ENCODE measurements at regions of chr17 and their contacts with region 1.

Region 1: GRCh38 chr17:4004517-4005295 is 40.5 kb upstream of the ATP2A3 start:
- DNase-seq: peak; percentile 77 to 83 (median 80)
- ATAC-seq: peak; percentile 87
- H3K4me3 ChIP-seq: no peak overlapping the region
- H3K4me1 ChIP-seq: peaks cover 8% of the 10 kb centered on the region
- CTCF ChIP-seq: peak; percentile 98

Region 2: DNA sequence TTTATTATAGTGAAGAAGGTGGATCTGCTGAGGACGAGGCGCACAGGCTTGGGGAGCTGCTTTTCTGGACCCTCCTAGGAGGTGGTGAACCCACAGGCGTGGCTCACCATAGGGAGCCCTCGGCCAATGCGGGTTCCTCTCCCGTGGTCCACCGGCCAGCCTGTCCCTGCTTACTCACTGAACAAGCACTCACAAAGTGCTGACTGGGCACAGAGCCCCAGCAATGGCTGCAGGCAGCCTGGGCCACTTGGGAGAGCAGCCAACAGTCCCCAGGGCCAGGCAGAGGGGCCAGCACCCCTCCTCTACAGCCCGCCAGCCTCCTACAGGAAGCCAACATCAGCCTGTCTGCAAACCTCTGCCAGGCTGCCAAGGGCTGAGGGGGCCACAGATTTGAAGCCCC is 139.5 kb before region 1 on chr17:
- intact Hi-C with region 1: loop called in 1 of 2 experiments (anchors 5 kb)
- DNase-seq: peak in 1 of 3 donors; percentile 55
- ATAC-seq: peak; percentile 17
- H3K4me3 ChIP-seq: no peak overlapping the region
- H3K4me1 ChIP-seq: no peaks in the 10 kb centered on the region
- CTCF ChIP-seq: no peak

Region 3: DNA sequence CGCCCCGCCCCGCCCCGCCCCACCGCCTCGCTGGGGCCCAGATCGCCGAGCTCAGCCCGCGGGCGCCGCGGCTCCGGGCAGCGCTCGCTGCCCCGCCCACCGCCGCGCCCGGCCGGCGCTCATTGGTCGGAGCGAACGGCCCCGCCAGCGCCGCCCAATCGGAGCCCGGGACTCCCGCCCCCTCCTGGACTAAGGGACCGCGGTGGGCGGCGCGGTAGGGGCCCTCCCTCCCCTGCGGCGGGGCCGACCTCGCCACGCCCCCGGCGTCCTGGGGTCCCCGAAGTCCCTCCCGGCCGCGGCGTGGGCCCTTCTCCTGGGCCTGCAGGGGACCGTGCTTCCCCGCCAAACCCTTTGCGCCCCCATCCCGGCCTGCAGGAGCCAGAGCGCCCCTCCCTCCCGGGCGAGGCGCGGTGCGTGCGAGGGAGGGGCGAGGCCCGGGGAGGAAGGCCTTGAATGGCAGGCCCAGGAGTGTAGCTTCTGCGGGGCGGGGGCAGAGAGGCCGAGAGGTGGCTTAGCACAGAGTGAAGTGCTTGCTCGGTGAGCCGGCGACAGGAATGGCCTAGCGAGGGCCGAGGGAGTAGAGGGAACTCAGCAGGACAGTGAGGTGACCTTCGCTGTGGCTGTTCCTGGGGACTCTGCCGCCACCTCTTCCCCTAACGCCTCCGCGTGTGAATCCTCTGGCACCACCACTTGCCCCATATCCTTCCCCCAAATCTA is 111.5 kb before region 1 on chr17 and contains the start of gene CAMKK1:
- intact Hi-C with region 1: no loop called
- DNase-seq: peak; percentile 93 to 95 (median 93)
- ATAC-seq: peak; percentile 76
- H3K4me3 ChIP-seq: peak within 1 kb of the TSS; percentile 30
- H3K4me1 ChIP-seq: peaks cover 48% of the 10 kb centered on the region
- CTCF ChIP-seq: no peak
- total RNA-seq, gene CAMKK1: 4.8 to 11.6 (median 6.2) TPM

Region 4: DNA sequence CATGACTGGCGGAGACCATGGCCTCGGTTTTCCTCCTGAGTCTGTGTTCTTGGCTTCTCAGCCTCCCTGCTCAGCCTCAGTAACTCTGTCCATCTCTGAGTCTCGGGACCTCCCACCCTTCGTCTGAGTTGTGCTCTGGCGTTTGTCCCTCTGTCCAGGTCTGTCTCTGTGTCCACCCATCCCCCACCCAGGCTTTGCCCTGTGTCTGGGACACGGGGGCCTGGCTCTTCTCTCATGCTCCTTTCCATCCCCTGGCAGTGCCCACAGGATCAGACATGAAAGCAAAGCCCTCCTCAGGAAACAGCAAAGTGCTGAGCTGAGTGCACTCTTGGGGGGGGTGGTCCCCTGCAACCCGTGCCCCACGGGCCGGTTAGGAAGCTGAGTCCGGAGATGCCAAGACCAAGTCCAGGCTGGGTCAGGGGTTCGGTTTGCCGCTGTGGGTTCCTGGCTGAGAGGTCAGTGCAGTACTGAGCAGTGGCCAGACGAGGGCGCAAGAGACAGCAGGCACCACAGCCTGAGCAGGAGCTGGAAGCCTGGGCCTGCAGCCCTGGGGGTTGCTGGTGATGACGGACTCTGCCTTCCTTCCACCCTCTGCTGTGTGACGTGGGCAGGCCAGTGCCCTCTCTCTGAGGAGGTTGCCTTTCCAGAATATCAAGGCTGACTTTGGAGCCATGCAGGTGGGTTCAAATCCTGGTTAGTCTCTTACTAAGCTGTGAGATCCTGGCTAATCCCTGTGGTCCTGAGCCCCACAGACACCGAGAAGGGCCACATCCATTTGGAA is 91.0 kb before region 1 on chr17:
- intact Hi-C with region 1: loop called in 1 of 2 experiments (anchors 5 kb)
- DNase-seq: peak; percentile 87 to 90 (median 89)
- ATAC-seq: peak; percentile 82
- H3K4me3 ChIP-seq: no peak overlapping the region
- H3K4me1 ChIP-seq: peaks cover 23% of the 10 kb centered on the region
- CTCF ChIP-seq: peak; percentile 97

Region 5: GRCh38 chr17:3935140-3935542 is 69.6 kb before region 1 on chr17:
- intact Hi-C with region 1: loop called in 1 of 2 experiments (anchors 10 kb)
- DNase-seq: peak in 2 of 3 donors; percentile 82 to 83
- ATAC-seq: peak; percentile 92
- H3K4me3 ChIP-seq: no peak overlapping the region
- H3K4me1 ChIP-seq: no peaks in the 10 kb centered on the region
- CTCF ChIP-seq: peak; percentile 28

Region 6: DNA sequence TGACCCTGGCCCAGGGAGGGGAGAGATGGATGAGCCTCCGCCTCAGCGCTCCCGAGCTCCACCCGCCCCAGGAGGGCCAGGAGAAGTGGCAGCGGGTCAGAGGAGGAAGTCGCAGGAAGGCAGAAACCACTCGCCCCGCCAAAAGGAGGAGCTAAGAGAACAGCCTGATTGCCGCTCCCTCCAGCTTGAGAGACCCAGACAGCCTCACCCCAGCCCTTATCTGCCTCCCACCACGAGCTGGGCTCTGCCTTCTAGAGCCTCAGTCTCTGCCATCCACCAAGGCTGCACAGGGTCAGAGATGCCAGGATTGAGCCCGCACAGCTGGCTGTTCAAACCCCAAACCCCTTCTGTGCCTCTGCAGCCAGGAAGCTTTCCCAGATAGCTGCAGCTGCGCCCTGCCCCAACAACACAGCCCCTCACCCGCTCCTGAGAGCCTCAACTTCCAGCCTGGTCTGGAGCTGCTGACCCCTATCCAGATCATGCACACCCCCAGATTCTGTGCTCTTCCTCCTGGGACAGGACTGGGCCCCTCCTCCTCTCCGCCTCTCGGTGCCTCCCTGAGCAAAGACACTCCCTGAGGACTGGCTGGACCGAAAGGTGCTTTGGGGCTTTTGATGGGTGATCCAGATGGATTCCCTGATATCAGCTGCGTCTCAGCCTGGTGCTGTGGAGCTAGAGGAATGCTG is 39.4 kb before region 1 on chr17:
- intact Hi-C with region 1: no loop called
- DNase-seq: peak; percentile 91 to 93 (median 91)
- ATAC-seq: peak; percentile 68
- H3K4me3 ChIP-seq: no peak overlapping the region
- H3K4me1 ChIP-seq: peaks cover 53% of the 10 kb centered on the region
- CTCF ChIP-seq: no peak

Measured in mucosa of descending colon (tissue), 3 donors.